ENCODE measurements at regions of chr17 and their contacts with region 1.

Region 1: GRCh38 chr17:59753522-59754467 is 46.3 kb downstream of the VMP1 start:
- DNase-seq: peak; percentile 86

Region 2: DNA sequence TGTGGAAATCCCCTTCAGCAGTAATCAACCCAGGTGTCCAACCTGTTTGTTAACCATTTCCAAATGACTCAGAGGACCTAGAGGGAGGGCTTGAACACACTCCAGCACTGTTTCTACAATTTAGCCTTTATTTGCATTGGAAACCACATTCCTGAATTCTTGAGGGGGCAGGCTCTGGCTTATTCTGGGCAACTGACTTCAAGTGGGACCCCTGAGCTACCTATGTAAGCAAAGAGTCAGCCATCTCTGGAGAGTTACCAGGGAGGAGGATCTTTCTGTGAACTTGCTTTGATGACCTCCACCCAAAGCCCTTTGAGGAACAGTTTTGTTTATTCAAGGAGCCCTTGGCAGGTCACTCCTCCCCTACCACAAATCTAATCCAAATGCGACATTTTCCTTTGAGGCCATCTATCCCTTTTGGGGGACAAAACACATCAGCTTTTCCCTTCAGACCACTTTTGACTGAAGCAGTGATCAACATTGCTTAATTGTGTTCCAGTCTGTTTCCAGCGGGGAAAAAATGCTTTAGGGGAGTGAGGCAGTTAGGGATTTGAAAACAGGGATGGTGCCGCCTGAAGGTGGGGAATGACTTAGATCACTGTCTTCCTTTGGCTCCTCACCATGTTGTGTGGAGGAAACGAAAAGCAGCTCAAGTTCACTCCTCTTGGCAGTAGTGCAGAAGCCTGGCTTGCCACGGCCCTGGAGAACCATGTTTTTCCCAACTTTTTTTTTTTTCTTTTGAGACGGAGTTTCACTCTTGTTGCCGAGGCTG is 92.8 kb after region 1 on chr17:
- in situ Hi-C with region 1: loop called (anchors 10 kb)
- DNase-seq: peak; percentile 42